ENCODE measurements at regions of chr4 and their contacts with region 1.

Region 1: DNA sequence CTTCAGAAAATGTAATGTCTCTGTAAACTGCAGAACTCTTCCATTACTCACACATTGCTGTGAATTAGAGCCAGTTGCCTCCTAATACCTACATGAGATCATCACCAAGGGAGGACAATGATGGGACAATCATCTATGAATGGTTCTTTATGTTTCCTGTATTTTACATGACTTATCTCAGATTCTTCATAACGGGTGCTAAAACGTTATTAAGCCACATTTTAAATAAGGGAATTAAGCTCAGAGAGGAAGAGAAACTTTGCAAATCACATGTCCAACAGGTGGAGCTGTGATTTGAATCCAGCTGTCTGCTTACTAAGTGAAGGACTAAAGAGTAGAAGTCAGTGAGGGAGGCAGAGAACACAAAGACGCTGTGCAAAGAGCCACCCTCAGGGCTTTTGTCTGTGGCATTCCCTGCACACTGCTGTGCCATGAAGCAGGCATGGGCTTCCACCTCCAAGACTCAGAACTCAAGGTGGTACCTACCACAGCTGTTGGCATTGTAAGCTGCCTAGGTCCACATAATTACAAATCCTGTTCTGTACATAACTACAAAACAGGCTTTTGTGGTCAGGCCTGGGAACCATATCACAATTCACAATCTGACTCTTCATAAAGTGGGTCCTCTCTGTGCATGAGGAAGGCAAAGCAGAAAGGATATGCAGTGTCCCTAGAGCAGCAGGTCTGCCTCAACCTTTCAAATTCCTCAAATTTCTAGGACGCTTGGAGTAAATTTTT is 12.8 kb downstream of the TBC1D9 start:
- DNase-seq: peak; percentile 89
- H3K4me3 ChIP-seq: peak overlapping the region; percentile 44
- H3K27ac ChIP-seq: peak overlapping the region; percentile 86
- H3K4me1 ChIP-seq: peaks cover 56% of the 10 kb centered on the region
- CTCF ChIP-seq: peak; percentile 79

Region 2: DNA sequence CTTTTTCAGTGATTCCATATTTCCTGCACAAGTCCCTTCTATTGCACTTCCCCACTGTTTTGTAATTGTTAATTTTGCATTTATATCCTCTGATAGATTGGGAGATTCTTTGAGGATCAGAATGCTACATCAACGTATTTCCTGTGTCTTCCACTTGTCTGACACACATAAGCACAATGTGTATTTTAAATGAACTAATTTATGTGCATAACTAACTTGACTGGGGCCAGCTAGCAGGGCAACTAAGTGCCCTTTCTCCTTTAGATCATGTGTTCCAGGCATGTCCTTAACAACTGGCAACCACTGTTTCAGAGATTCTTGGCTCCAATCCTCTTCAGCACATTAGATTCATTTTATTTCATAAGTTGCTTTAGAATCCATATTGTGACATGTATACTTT is 158.9 kb before region 1 on chr4:
- CTCF ChIA-PET with region 1: no interaction called
- POLR2A ChIA-PET with region 1: no interaction called
- intact Hi-C with region 1: no loop called
- DNase-seq: no peak
- H3K4me3 ChIP-seq: no peak overlapping the region
- H3K27ac ChIP-seq: no peak overlapping the region
- H3K4me1 ChIP-seq: no peaks in the 10 kb centered on the region
- CTCF ChIP-seq: no peak

Region 3: GRCh38 chr4:140617499-140618248 is 125.7 kb before region 1 on chr4:
- CTCF ChIA-PET with region 1: no interaction called
- POLR2A ChIA-PET with region 1: interaction called, 3 read pairs
- intact Hi-C with region 1: loop called (anchors 1 kb)
- DNase-seq: no peak
- H3K4me3 ChIP-seq: no peak overlapping the region
- H3K27ac ChIP-seq: peak overlapping the region; percentile 22
- H3K4me1 ChIP-seq: peaks cover 79% of the 10 kb centered on the region
- CTCF ChIP-seq: no peak

Region 4: GRCh38 chr4:140697709-140698560 is 45.4 kb before region 1 on chr4:
- CTCF ChIA-PET with region 1: no interaction called
- POLR2A ChIA-PET with region 1: no interaction called
- intact Hi-C with region 1: no loop called
- DNase-seq: no peak
- H3K4me3 ChIP-seq: no peak overlapping the region
- H3K27ac ChIP-seq: no peak overlapping the region
- H3K4me1 ChIP-seq: no peaks in the 10 kb centered on the region
- CTCF ChIP-seq: no peak

Region 5: DNA sequence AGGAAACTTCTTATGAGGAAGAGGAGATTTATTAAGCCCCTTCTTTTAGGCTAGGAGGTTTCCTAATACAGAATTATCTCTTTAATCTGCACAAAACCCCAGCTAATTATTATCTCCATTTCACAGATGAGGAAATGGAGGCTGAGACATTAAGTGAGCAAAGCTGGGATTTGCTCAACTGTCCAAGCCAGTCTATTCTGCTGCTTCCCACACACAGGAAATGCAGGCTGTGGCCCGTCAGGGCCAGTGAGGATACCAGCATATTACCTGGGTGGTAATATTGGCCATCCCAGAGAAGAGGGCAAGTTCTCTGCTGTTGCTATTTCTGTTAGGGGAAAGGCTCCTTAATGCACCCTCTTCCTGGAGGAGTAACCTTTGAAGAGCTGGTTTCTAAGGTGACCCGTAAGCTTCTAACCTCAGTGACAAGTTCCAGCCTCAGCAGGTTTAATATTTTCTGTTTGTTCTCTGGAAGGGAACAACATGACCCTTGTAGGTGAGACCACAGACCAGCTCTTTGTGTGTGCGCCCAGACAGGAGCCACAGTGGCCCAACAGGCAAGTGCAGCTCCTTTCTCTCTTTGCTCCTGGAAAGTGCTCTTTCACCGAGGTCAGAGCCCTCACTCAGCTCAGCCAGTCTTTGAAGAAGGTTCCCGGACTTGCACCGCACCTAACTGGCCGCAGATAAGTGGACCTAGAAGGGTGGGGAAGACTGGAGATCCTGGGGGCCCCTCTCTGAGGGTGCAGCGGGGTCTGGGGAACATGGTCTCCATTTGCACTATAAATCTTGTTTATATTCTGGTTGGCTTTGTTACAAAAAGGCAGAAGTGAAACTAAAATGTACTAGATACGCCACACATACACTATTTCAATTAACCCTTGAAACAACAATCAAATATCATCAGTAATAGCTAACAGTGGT is 22.7 kb before region 1 on chr4:
- CTCF ChIA-PET with region 1: interaction called, 6 read pairs
- POLR2A ChIA-PET with region 1: interaction called, 124 read pairs
- intact Hi-C with region 1: loop called (anchors 1 kb)
- DNase-seq: peak; percentile 76
- H3K4me3 ChIP-seq: peak overlapping the region; percentile 65
- H3K27ac ChIP-seq: peak overlapping the region; percentile 70
- H3K4me1 ChIP-seq: peaks cover 57% of the 10 kb centered on the region
- CTCF ChIP-seq: no peak

Region 6: GRCh38 chr4:140790765-140791164 is 47.4 kb after region 1 on chr4:
- CTCF ChIA-PET with region 1: interaction called, 3 read pairs
- POLR2A ChIA-PET with region 1: interaction called, 6 read pairs
- intact Hi-C with region 1: loop called (anchors 2 kb)
- DNase-seq: peak; percentile 94
- H3K4me3 ChIP-seq: peak overlapping the region; percentile 12
- H3K27ac ChIP-seq: peak overlapping the region; percentile 47
- H3K4me1 ChIP-seq: peaks cover 46% of the 10 kb centered on the region
- CTCF ChIP-seq: no peak

Region 7: DNA sequence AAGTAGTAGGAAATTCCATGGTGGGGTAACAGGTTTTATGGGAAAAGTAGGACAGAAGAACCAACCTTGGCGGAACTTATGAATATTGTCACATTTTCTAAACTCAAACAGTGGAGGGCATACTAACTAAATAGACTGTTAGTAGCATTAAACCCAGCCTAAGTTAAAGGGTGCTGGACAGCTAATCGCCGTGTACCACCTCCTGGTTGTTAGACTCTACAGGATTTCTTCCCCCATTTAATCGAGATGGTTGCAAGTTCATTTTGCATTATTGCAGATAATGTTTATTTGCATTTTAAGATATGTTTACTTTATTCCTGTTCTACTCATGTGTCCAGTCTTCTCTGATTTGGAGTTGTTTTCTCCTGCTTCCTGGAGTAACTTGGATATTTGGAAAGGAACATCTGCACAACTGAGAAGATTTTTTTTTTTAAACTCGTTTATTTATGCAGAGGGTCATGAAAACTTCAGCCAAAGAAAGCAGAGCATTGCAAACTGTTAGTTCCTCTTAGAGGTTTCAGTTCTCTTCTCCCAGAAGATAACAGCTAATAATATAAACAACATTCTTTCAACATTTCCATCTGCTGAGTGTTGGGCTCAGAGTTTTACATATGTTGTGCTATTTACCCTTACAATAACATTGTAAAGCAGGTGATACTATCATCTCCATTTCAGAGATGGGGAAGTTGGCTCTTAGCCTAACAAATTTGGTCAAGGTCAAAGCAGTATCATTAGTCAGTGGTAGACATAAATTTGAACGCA is 64.3 kb after region 1 on chr4:
- CTCF ChIA-PET with region 1: no interaction called
- POLR2A ChIA-PET with region 1: interaction called, 5 read pairs
- intact Hi-C with region 1: loop called (anchors 1 kb)
- DNase-seq: peak; percentile 91
- H3K4me3 ChIP-seq: peak overlapping the region; percentile 53
- H3K27ac ChIP-seq: peak overlapping the region; percentile 98
- H3K4me1 ChIP-seq: peaks cover 91% of the 10 kb centered on the region
- CTCF ChIP-seq: 0 out of 2 replicates have a peak, but pooled peaks have one; percentile 30